Activated naive CD4-positive, alpha-beta T cell treated with anti-CD3 and anti-CD28 coated beads for 36 hours (primary cell): ENCODE measurements at regions of chr4 and their contacts with region 1.

Region 1: GRCh38 chr4:139665690-139666529 is at the start of gene MGST2:
- DNase-seq: peak; percentile 48
- H3K4me3 Mint-ChIP-seq: peak within 1 kb of the TSS; percentile 77
- H3K27ac Mint-ChIP-seq: peak within 1 kb of the TSS; percentile 62
- H3K4me1 Mint-ChIP-seq: peaks cover 15% of the 10 kb centered on the region
- H3K27me3 Mint-ChIP-seq: no peaks in the 10 kb centered on the region
- total RNA-seq, gene MGST2: 5.4 to 6.2 TPM

Region 2: DNA sequence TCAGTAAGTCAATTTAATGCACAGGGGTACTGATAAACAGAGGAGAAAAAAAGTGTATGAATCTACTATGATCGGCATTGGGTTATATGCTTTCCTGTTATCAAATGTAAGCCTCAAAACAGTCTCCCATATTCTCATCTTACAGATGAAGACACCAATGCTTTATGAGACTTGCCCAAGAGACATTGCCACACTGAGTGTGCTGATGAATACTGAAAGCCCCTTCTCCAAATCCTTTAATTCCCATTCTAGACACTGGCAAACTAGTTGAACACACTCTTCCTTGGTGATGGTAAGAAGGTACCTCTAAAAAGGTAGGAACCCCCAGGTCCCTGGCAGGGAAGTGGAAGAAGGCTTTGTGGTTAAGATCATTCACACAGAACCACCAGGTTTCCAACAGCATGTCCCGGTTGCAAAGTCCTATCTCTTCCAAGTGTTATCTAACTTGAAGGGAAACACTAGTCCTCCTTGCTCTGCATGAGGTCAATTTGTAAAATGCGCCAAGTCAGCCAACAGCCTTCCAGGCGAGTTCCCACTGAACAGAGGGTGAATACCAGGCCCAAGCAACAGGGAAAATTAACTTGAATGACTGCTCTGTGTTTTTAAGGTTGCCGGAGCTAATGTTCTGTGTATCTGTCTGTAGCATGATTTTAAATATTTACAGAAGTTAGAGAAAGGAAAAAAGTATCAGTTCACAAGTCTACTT is 115.0 kb before region 1 on chr4:
- CTCF ChIA-PET with region 1: no interaction called
- intact Hi-C with region 1: no loop called
- DNase-seq: no peak
- H3K4me3 Mint-ChIP-seq: no peak overlapping the region
- H3K27ac Mint-ChIP-seq: no peak overlapping the region
- H3K4me1 Mint-ChIP-seq: peaks cover 20% of the 10 kb centered on the region
- H3K27me3 Mint-ChIP-seq: no peaks in the 10 kb centered on the region

Region 3: GRCh38 chr4:139617683-139618082 is 48.2 kb before region 1 on chr4:
- CTCF ChIA-PET with region 1: no interaction called
- intact Hi-C with region 1: no loop called
- DNase-seq: no peak
- H3K4me3 Mint-ChIP-seq: no peak overlapping the region
- H3K27ac Mint-ChIP-seq: no peak overlapping the region
- H3K4me1 Mint-ChIP-seq: no peaks in the 10 kb centered on the region
- H3K27me3 Mint-ChIP-seq: no peaks in the 10 kb centered on the region

Region 4: GRCh38 chr4:139685180-139685579 is 19.3 kb after region 1 on chr4:
- CTCF ChIA-PET with region 1: interaction called, 3 read pairs
- intact Hi-C with region 1: loop called (anchors 1 kb)
- DNase-seq: peak; percentile 34
- H3K4me3 Mint-ChIP-seq: no peak overlapping the region
- H3K27ac Mint-ChIP-seq: no peak overlapping the region
- H3K4me1 Mint-ChIP-seq: peaks cover 5% of the 10 kb centered on the region
- H3K27me3 Mint-ChIP-seq: no peaks in the 10 kb centered on the region

Region 5: GRCh38 chr4:139720540-139721205 is 54.8 kb after region 1 on chr4:
- CTCF ChIA-PET with region 1: no interaction called
- intact Hi-C with region 1: no loop called
- DNase-seq: no peak
- H3K4me3 Mint-ChIP-seq: no peak overlapping the region
- H3K27ac Mint-ChIP-seq: no peak overlapping the region
- H3K4me1 Mint-ChIP-seq: no peaks in the 10 kb centered on the region
- H3K27me3 Mint-ChIP-seq: no peaks in the 10 kb centered on the region